CD4-positive, alpha-beta T cell (primary cell): ENCODE measurements at regions of chr17 and their contacts with region 1.

Region 1: DNA sequence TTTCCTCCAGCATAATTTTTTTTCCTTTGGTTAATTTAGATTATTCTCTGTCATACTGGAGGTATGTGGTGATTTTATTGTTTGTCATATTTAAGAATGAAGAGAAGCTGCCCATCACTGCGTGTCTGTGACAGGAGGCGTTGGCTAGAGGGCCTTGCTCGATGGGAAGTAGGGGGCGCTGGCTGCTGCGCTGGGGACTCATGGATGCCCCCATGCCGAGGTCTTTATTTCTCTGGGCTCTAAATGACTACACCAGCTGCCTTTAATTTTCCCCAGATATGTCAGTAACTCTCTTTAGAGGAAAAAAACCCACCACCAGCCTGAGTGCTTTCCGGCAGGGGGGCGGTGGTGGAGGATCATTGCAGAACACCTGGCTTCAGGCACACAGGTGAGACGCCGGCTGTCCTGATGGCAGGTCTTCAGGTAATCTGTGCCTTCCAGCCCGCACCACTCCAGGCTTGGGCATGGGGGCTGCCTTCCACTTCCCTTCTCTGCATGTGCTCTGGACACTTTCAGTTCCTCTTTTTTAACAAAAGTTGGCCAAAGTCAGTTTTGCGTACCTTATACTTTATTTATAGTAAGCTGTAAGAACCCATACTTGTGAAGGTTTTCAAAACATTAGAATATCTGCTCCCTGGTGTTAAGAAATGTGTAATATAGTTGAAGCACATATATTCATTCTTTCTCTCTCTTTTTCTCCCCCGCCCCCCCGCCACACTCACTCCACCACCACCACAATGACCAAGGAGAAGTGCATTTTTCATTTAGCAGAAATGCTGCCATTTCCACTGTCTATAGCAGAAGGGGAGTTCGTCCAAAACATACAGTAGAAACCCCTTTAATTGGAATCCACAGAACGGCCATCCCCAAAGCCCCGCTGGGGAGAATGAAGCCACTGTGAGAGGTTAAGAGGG is 192.7 kb downstream of the RPTOR start:
- DNase-seq: peak in 1 of 14 experiments; percentile 40
- ATAC-seq: no peak
- H3K4me3 ChIP-seq: no peak overlapping the region
- H3K4me3 Mint-ChIP-seq: no peak overlapping the region
- H3K27ac ChIP-seq: no peak overlapping the region
- H3K27ac Mint-ChIP-seq: peak overlapping the region; percentile 65
- H3K4me1 ChIP-seq: peaks cover 22% of the 10 kb centered on the region
- H3K4me1 Mint-ChIP-seq: peaks cover 57% of the 10 kb centered on the region
- H3K27me3 ChIP-seq: no peaks in the 10 kb centered on the region
- H3K27me3 Mint-ChIP-seq: no peaks in the 10 kb centered on the region
- CTCF ChIP-seq: no peak

Region 2: GRCh38 chr17:80696456-80696855 is 40.9 kb before region 1 on chr17:
- CTCF ChIA-PET with region 1: no interaction called
- POLR2A ChIA-PET with region 1: no interaction called
- intact Hi-C with region 1: no loop called
- DNase-seq: no peak
- ATAC-seq: no peak
- H3K4me3 ChIP-seq: no peak overlapping the region
- H3K4me3 Mint-ChIP-seq: no peak overlapping the region
- H3K27ac ChIP-seq: no peak overlapping the region
- H3K27ac Mint-ChIP-seq: peak overlapping the region; percentile 53
- H3K4me1 ChIP-seq: peaks cover 18% of the 10 kb centered on the region
- H3K4me1 Mint-ChIP-seq: peaks cover 55% of the 10 kb centered on the region
- H3K27me3 ChIP-seq: no peaks in the 10 kb centered on the region
- H3K27me3 Mint-ChIP-seq: no peaks in the 10 kb centered on the region
- CTCF ChIP-seq: no peak

Region 3: GRCh38 chr17:80780381-80781198 is 43.2 kb after region 1 on chr17:
- CTCF ChIA-PET with region 1: no interaction called
- POLR2A ChIA-PET with region 1: no interaction called
- intact Hi-C with region 1: loop called (anchors 2 to 10 kb)
- DNase-seq: peak in 3 of 14 experiments; percentile 50 to 67 (median 50)
- ATAC-seq: peak; percentile 54
- H3K4me3 ChIP-seq: peak overlapping the region; percentile 32
- H3K4me3 Mint-ChIP-seq: peak overlapping the region; percentile 36
- H3K27ac ChIP-seq: peak overlapping the region; percentile 55 to 75
- H3K27ac Mint-ChIP-seq: peak overlapping the region; percentile 85
- H3K4me1 ChIP-seq: peaks cover 58% of the 10 kb centered on the region
- H3K4me1 Mint-ChIP-seq: peaks cover 76% of the 10 kb centered on the region
- H3K27me3 ChIP-seq: no peaks in the 10 kb centered on the region
- H3K27me3 Mint-ChIP-seq: no peaks in the 10 kb centered on the region
- CTCF ChIP-seq: no peak